Activated naive CD8-positive, alpha-beta T cell treated with anti-CD3 and anti-CD28 coated beads, Interleukin-2, amount 10 ng/mL, durations not matched to agents 7 days and 5 days (primary cell): ENCODE measurements at regions of chr5 and their contacts with region 1.

Region 1: GRCh38 chr5:157271740-157272271 is 5.9 kb downstream of the CYFIP2 start:
- DNase-seq: peak; percentile 82
- ATAC-seq: peak; percentile 87
- H3K4me3 Mint-ChIP-seq: peak overlapping the region; percentile 93
- H3K27ac Mint-ChIP-seq: peak overlapping the region; percentile 99
- H3K4me1 Mint-ChIP-seq: peaks cover 76% of the 10 kb centered on the region
- H3K27me3 Mint-ChIP-seq: no peaks in the 10 kb centered on the region

Region 2: GRCh38 chr5:157189223-157189622 is 82.6 kb before region 1 on chr5:
- POLR2A ChIA-PET with region 1: interaction called, 27 read pairs
- DNase-seq: no peak
- ATAC-seq: peak; percentile 24
- H3K4me3 Mint-ChIP-seq: peak overlapping the region; percentile 85
- H3K27ac Mint-ChIP-seq: peak overlapping the region; percentile 82
- H3K4me1 Mint-ChIP-seq: peaks cover 73% of the 10 kb centered on the region
- H3K27me3 Mint-ChIP-seq: no peaks in the 10 kb centered on the region

Region 3: GRCh38 chr5:157253547-157253946 is 18.3 kb before region 1 on chr5:
- POLR2A ChIA-PET with region 1: interaction called, 68 read pairs
- DNase-seq: no peak
- ATAC-seq: no peak
- H3K4me3 Mint-ChIP-seq: peak overlapping the region; percentile 60
- H3K27ac Mint-ChIP-seq: peak overlapping the region; percentile 88
- H3K4me1 Mint-ChIP-seq: peaks cover 87% of the 10 kb centered on the region
- H3K27me3 Mint-ChIP-seq: no peaks in the 10 kb centered on the region

Region 4: DNA sequence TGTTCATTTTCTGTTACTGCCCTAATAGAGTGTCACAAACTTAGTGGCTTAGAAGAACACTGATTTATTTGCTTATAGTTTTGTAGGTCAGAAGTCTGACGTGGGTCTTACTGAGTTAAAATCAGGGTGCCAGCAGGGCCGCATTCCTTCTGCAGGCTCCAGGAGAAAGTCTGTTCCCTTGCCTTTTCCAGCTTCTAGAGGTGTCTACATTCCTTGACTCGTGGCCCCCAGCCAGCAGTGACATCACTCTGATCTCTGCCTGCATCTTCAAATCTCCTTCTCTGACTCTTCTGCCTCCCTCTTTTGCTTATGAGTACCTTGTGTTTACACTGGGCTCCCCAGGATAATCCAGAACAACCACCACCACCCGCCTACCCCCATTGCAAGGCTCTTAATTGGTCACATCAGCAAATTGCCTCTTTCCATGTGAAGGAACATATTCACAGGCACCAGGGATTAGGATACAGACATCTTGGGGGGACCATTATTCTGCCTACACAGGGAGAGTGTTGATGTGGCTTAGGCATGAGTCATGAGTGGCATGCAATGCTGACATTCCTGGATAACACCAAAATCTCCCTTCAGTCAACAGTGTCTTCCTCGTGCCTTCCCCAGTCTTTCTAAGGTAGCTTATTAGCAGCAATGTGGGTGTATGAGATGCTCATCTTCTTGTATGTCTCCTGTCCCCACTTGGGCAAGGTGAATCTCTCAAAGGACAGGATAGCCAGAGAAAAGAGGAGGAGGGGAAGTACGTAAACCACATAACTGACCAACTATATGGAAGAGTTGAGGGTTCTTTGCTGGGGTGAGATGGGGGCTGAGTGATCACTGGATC is 18.6 kb after region 1 on chr5:
- POLR2A ChIA-PET with region 1: interaction called, 51 read pairs
- DNase-seq: no peak
- ATAC-seq: no peak
- H3K4me3 Mint-ChIP-seq: no peak overlapping the region
- H3K27ac Mint-ChIP-seq: peak overlapping the region; percentile 79
- H3K4me1 Mint-ChIP-seq: peaks cover 52% of the 10 kb centered on the region
- H3K27me3 Mint-ChIP-seq: no peaks in the 10 kb centered on the region

Region 5: GRCh38 chr5:157443041-157443549 is 171.3 kb after region 1 on chr5:
- POLR2A ChIA-PET with region 1: no interaction called
- DNase-seq: no peak
- ATAC-seq: no peak
- H3K4me3 Mint-ChIP-seq: no peak overlapping the region
- H3K27ac Mint-ChIP-seq: no peak overlapping the region
- H3K4me1 Mint-ChIP-seq: no peaks in the 10 kb centered on the region
- H3K27me3 Mint-ChIP-seq: peaks cover 28% of the 10 kb centered on the region